ENCODE measurements at regions of chr17 and their contacts with region 1.

Region 1: GRCh38 chr17:49548506-49549310 is 27.0 kb upstream of the NXPH3 start:
- DNase-seq: peak; percentile 69
- ATAC-seq: peak; percentile 56
- H3K4me3 ChIP-seq: no peak overlapping the region
- H3K27ac ChIP-seq: no peak overlapping the region
- H3K4me1 ChIP-seq: no peaks in the 10 kb centered on the region
- H3K27me3 ChIP-seq: peaks cover 4% of the 10 kb centered on the region
- CTCF ChIP-seq: peak; percentile 53

Region 2: DNA sequence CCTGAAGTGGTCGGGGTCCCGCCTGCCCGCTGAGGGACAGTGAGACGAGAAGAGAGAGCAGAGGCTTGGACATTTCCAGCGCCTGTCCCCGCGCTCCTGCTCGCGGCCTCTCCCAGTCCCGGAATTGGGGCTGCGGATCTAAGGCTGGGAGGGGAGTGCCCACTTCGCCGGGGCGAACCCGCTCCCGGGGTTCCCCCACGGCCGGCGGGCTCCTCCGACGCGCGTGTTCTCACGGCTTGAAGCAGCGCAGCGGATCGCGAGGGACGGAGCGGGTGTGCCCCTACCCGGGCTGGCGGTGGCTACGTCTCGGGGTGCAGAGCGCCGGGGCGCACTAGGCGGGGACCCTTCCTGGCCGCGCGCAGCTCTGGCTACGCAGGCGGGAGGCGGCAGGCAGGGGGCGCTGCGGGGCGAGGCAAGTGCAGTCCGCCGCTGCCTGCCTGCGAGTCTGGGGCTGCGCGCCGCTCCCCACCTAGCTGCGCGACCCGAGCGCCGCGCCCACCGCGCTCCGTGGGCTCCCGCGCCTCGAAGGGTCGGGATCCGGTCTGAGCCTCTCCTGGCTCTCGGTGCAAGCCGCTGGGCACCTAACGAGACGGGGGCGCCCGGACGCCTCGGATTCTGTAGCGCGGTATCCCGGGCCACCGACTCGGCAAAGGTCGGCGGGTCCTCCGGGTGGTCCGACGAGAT is 52.4 kb before region 1 on chr17:
- intact Hi-C with region 1: loop called (anchors 10 kb)
- DNase-seq: peak; percentile 87
- ATAC-seq: peak; percentile 87
- H3K4me3 ChIP-seq: peak overlapping the region; percentile 37
- H3K27ac ChIP-seq: no peak overlapping the region
- H3K4me1 ChIP-seq: peaks cover 31% of the 10 kb centered on the region
- H3K27me3 ChIP-seq: peaks cover 61% of the 10 kb centered on the region
- CTCF ChIP-seq: peak; percentile 84